Transverse colon (tissue), 4 donors: ENCODE measurements at regions of chr6 and their contacts with region 1.

Region 1: DNA sequence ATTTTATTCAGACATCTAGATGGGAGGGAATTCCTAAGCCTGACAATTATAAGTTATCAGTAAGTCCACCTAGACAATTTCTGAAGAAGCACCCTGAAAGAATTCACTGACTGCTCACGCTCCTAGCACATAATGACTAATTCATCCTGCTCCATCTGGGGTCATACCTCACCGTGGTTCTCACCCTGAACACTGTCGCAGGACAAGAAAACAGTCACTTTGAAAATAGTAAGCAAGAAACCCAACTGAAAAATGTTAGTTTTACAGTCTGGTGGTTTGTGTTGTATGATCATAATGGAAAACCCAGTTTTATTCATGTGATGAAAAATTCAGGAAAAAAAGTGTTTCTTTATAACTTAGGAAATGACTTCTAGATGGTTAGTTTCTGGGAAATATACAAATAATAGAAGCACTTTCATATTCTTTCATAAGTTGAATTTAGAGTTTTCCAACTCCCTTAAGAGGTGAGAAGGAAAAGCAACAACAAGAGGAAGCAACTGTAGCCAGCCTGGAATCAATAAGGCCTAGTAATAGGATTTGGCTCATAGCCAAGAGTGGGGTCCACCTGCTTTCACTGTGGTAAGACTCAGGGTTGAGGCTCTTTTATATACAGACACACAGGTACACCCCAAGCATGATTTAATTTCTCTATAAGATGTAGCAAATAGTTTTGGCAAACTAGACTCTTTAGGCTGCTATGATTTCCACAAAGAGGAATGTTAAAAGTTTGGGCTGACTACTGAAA is 94.1 kb downstream of the HIVEP2 start:
- DNase-seq: no peak
- H3K4me3 ChIP-seq: no peak overlapping the region
- H3K27ac ChIP-seq: peak overlapping the region in 2 of 4 donors; percentile 1 to 24
- H3K4me1 ChIP-seq: peaks cover 27 to 89% (median 39%) of the 10 kb centered on the region in 4 donors
- H3K27me3 ChIP-seq: no peaks in the 10 kb centered on the region
- CTCF ChIP-seq: no peak
- EP300 ChIP-seq: no peak
- POLR2A ChIP-seq: no peak

Region 2: DNA sequence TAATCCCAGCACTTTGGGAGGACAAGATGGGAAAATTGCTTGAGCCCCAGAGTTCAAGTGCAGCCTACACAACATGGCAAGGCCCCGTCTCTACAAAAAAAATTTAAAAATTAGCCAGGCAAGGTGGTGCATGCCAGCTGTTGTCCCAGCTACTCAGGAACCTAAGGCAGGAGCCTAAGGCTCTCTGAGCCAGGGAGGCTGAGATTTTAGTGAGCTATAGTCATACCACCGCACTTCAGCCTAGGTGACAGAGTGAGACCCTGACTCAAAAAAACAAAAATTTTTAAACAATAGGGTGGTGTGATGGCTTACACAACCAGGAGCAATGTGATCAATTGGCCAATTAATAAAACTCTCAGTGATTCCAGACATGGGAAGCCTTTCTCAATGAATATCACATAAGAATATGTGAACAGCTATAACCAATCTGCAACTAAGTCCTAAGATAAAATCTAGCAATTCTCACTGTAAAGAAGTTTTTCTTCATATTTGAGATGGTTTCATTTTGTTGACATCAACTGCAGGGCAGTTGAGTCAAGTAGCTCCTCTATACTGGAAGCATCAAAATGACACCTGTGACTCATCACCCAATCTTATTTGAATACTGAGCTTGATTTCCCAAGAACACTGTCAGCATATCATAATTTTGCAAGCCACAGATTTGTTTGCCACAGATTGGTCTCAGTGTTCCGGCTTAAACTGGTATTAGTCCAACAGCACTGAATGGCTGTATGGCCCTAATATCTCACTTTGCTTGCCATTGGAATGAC is 887.1 kb before region 1 on chr6:
- in situ Hi-C with region 1: no loop called
- intact Hi-C with region 1: no loop called
- DNase-seq: no peak
- H3K4me3 ChIP-seq: no peak overlapping the region
- H3K27ac ChIP-seq: no peak overlapping the region
- H3K4me1 ChIP-seq: no peaks in the 10 kb centered on the region
- H3K27me3 ChIP-seq: no peaks in the 10 kb centered on the region
- CTCF ChIP-seq: no peak
- EP300 ChIP-seq: no peak
- POLR2A ChIP-seq: no peak

Region 3: DNA sequence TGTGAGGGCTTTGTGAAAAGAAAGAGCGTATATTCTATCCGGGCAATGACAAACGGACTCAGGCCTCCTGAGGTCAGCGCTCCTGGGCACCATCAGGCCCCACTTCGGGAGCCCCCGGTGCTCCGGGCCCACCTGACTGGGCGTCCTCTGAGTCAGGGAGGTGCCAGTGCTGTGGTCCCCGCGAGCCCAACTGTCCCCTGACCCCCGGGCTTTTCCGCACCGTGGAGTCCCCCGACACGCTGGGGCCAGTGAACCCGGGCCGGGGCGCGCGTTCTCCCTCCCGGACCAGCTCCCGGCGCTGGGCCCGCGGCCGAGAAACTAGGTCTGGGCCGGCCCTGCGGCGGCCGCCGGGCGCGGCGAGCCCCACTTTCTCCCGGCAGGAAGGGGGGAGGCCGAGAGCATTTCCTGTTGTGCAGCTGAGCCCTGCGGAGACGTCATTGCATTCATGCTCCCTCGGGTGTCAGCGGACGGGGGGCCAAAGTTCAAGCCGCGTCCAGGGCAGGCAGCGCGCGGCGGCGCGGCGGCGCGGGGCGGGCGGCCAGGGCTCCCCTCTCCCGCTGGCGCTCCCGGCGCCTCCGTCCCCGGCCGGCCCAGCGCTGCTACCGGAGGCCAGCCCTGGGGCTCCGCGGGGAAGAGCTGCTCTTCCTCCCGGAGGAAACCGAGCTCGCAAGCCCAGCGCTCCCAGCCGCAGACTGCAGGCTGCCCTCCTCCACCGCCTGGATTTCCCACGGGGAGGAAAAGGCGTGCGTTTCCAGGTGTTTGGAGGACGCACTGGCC is 75.8 kb after region 1 on chr6:
- in situ Hi-C with region 1: no loop called
- intact Hi-C with region 1: loop called (anchors 5 kb)
- DNase-seq: peak; percentile 90
- H3K4me3 ChIP-seq: peak overlapping the region; percentile 46 to 59 (median 58)
- H3K27ac ChIP-seq: peak overlapping the region; percentile 87 to 93 (median 89)
- H3K4me1 ChIP-seq: peaks cover 0 to 22% (median 10%) of the 10 kb centered on the region in 4 donors
- H3K27me3 ChIP-seq: no peaks in the 10 kb centered on the region
- CTCF ChIP-seq: no peak
- EP300 ChIP-seq: no peak
- POLR2A ChIP-seq: peak; percentile 86